B cell (primary cell): ENCODE measurements at regions of chr10 and their contacts with region 1.

Region 1: GRCh38 chr10:124601431-124602120 is 140.0 kb downstream of the LHPP start:
- DNase-seq: peak; percentile 96
- ATAC-seq: peak; percentile 85
- H3K4me3 ChIP-seq: peak overlapping the region in 2 of 5 experiments; percentile 5 to 18
- H3K4me3 Mint-ChIP-seq: peak overlapping the region; percentile 52
- H3K27ac ChIP-seq: peak overlapping the region; percentile 90 to 99
- H3K27ac Mint-ChIP-seq: peak overlapping the region; percentile 99
- H3K4me1 ChIP-seq: peaks cover 98 to 100% of the 10 kb centered on the region in 2 donors
- H3K4me1 Mint-ChIP-seq: peaks cover 94% of the 10 kb centered on the region
- H3K27me3 ChIP-seq: no peaks in the 10 kb centered on the region
- H3K27me3 Mint-ChIP-seq: no peaks in the 10 kb centered on the region
- CTCF ChIP-seq: no peak

Region 2: DNA sequence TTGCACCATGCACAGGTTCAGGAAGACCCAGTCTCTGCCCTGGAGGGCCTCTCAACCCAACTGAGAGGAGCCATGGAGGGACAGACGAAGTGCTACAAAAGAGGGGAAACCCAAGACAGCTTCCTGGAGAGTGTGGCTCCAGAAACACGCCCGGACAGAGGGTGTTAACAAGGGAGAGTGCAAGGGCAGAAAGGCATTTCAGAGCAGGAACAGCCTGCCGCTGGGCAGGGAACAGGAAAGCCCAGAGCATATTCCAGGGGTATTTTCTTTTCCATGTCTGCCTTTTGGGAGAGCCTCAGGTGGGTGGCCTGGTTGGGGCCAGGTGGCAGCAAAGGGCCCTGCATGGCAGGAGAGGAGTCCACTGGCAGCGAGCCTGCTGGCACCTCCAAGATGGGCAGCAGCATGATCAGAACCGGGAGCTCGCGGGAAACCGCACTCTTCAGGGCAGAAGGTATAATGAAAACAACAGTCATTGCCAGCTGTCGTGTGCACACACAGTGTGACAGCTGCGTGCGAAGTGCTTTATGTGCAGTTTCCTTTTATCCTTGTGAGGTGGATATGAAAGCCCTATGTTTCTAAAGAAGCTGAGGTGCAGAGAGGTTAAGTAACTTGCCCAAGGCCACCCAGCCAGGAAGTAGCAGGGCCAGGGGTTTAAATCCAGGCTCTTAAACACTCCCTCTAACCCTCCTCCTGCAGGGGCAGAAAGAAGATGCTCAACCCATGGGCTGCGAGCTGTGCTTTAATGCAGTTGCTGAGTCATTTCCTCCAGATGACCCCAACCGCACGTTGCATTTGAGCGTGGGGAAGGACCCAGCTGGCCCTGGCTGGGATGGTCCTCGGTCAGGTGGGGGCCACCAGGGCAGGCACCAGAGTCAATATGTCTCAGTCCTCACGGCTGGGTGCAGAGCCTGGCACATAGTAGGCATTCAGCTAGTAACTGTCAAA is 311.5 kb before region 1 on chr10:
- CTCF ChIA-PET with region 1: no interaction called
- POLR2A ChIA-PET with region 1: no interaction called
- intact Hi-C with region 1: no loop called
- DNase-seq: no peak
- ATAC-seq: no peak
- H3K4me3 ChIP-seq: no peak overlapping the region
- H3K4me3 Mint-ChIP-seq: no peak overlapping the region
- H3K27ac ChIP-seq: no peak overlapping the region
- H3K27ac Mint-ChIP-seq: no peak overlapping the region
- H3K4me1 ChIP-seq: peaks cover 9 to 13% of the 10 kb centered on the region in 2 donors
- H3K4me1 Mint-ChIP-seq: peaks cover 14% of the 10 kb centered on the region
- H3K27me3 ChIP-seq: no peaks in the 10 kb centered on the region
- H3K27me3 Mint-ChIP-seq: no peaks in the 10 kb centered on the region
- CTCF ChIP-seq: no peak

Region 3: GRCh38 chr10:124539935-124540641 is 61.5 kb before region 1 on chr10:
- CTCF ChIA-PET with region 1: interaction called, 74 read pairs
- POLR2A ChIA-PET with region 1: interaction called, 21 read pairs
- intact Hi-C with region 1: loop called (anchors 1 kb)
- DNase-seq: peak; percentile 89
- ATAC-seq: peak; percentile 71
- H3K4me3 ChIP-seq: no peak overlapping the region
- H3K4me3 Mint-ChIP-seq: peak overlapping the region; percentile 65
- H3K27ac ChIP-seq: peak overlapping the region; percentile 76 to 94
- H3K27ac Mint-ChIP-seq: peak overlapping the region; percentile 95
- H3K4me1 ChIP-seq: peaks cover 88 to 99% of the 10 kb centered on the region in 2 donors
- H3K4me1 Mint-ChIP-seq: peaks cover 90% of the 10 kb centered on the region
- H3K27me3 ChIP-seq: no peaks in the 10 kb centered on the region
- H3K27me3 Mint-ChIP-seq: no peaks in the 10 kb centered on the region
- CTCF ChIP-seq: peak; percentile 69

Region 4: DNA sequence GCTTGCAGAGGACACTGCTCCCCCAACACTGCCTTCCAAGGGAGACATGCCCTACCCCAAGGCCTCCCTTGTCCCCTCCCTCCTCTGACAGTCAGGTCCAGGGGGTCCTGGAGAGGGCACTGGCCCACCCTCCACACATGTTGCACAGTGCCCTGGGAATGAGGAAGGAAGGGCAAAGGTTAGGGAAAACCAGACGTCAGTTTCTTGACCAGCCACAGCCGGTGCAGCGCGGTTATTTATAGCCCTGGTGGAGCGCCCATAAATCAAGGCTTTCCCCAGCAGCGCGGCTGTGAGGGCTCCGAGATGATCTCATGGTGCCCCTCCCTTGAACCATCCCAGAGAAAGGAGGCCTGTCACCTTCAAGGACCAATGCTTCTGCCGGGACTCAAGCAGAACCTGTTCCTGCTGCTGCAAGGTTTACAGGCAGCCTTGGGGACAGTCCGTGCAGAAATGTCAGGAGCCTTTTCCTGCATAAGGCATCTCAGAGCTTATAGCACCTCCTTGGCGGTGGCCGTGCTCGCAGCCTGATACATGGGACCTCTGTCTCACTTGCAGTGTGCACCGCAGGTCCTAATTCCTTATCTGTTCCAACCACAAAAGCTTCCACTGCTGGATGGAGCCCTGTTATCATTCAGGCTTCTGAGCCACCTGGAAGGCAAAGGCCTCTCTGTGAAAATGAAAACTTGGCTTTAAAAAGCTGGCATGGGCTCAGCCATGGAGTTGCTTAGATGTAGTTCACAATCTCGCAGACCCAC is 12.7 kb before region 1 on chr10:
- CTCF ChIA-PET with region 1: interaction called, 9 read pairs
- POLR2A ChIA-PET with region 1: interaction called, 18 read pairs
- intact Hi-C with region 1: loop called (anchors 1 kb)
- DNase-seq: no peak
- ATAC-seq: peak; percentile 18
- H3K4me3 ChIP-seq: no peak overlapping the region
- H3K4me3 Mint-ChIP-seq: peak overlapping the region; percentile 45
- H3K27ac ChIP-seq: no peak overlapping the region
- H3K27ac Mint-ChIP-seq: peak overlapping the region; percentile 50
- H3K4me1 ChIP-seq: peaks cover 44 to 48% of the 10 kb centered on the region in 2 donors
- H3K4me1 Mint-ChIP-seq: peaks cover 58% of the 10 kb centered on the region
- H3K27me3 ChIP-seq: no peaks in the 10 kb centered on the region
- H3K27me3 Mint-ChIP-seq: no peaks in the 10 kb centered on the region
- CTCF ChIP-seq: no peak

Region 5: DNA sequence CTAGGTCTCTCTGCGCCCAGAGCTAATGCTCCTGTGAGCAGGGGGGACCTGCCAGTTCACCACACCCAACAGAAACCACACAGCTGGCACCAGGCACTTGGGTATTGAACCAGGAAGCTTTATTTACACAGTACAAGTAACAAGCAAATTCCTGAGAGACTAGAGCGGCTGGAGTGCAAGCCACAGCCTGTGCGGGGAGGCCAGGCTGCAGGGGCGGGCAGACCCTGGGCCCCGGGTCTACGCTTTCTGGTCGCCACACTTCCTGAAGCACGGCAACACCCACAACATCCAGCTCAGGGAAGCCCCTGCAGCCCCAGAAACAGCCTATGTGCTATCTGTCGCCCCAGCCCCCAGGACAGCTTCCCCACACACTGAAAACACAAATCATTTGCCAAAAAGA is 17.6 kb after region 1 on chr10:
- CTCF ChIA-PET with region 1: interaction called, 37 read pairs
- POLR2A ChIA-PET with region 1: interaction called, 163 read pairs
- intact Hi-C with region 1: loop called (anchors 1 kb)
- DNase-seq: peak; percentile 84
- ATAC-seq: peak; percentile 75
- H3K4me3 ChIP-seq: peak overlapping the region in 4 of 5 experiments; percentile 19 to 55 (median 28)
- H3K4me3 Mint-ChIP-seq: peak overlapping the region; percentile 87
- H3K27ac ChIP-seq: peak overlapping the region; percentile 97 to 98
- H3K27ac Mint-ChIP-seq: peak overlapping the region; percentile 99
- H3K4me1 ChIP-seq: peaks cover 96 to 100% of the 10 kb centered on the region in 2 donors
- H3K4me1 Mint-ChIP-seq: peaks cover 93% of the 10 kb centered on the region
- H3K27me3 ChIP-seq: no peaks in the 10 kb centered on the region
- H3K27me3 Mint-ChIP-seq: no peaks in the 10 kb centered on the region
- CTCF ChIP-seq: no peak

Region 6: DNA sequence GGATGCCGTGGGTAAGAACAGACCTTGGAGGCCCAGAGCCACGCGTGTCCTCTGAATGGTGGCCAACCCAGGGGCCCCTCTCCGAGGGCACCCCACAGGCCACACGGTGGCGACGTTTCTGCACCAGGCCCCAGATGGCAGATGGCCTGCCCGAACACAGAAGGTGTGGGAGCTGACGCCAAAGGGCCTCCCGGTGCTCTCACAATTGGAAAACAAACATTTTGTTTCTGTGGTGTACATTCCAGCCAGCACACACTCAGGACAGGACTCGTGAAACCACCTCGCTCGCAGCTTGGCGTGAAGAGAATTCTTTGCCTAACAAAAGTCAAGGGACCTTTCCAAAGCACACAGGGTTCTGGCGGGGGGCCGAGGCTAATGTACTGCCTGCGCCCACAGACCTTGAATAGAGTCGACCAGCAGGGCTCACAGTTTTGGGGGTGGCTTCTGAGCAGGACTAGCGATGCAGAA is 30.5 kb after region 1 on chr10:
- CTCF ChIA-PET with region 1: interaction called, 34 read pairs
- POLR2A ChIA-PET with region 1: interaction called, 10 read pairs
- intact Hi-C with region 1: no loop called
- DNase-seq: peak; percentile 37
- ATAC-seq: no peak
- H3K4me3 ChIP-seq: no peak overlapping the region
- H3K4me3 Mint-ChIP-seq: peak overlapping the region; percentile 7
- H3K27ac ChIP-seq: peak overlapping the region; percentile 28 to 97
- H3K27ac Mint-ChIP-seq: peak overlapping the region; percentile 99
- H3K4me1 ChIP-seq: peaks cover 86 to 92% of the 10 kb centered on the region in 2 donors
- H3K4me1 Mint-ChIP-seq: peaks cover 88% of the 10 kb centered on the region
- H3K27me3 ChIP-seq: no peaks in the 10 kb centered on the region
- H3K27me3 Mint-ChIP-seq: no peaks in the 10 kb centered on the region
- CTCF ChIP-seq: no peak

Region 7: GRCh38 chr10:124656541-124656940 is 55.0 kb after region 1 on chr10:
- CTCF ChIA-PET with region 1: no interaction called
- POLR2A ChIA-PET with region 1: no interaction called
- intact Hi-C with region 1: no loop called
- DNase-seq: no peak
- ATAC-seq: no peak
- H3K4me3 ChIP-seq: no peak overlapping the region
- H3K4me3 Mint-ChIP-seq: no peak overlapping the region
- H3K27ac ChIP-seq: peak overlapping the region in 1 of 2 donors; percentile 92
- H3K27ac Mint-ChIP-seq: peak overlapping the region; percentile 60
- H3K4me1 ChIP-seq: peaks cover 86 to 93% of the 10 kb centered on the region in 2 donors
- H3K4me1 Mint-ChIP-seq: peaks cover 88% of the 10 kb centered on the region
- H3K27me3 ChIP-seq: no peaks in the 10 kb centered on the region
- H3K27me3 Mint-ChIP-seq: no peaks in the 10 kb centered on the region
- CTCF ChIP-seq: no peak

Region 8: GRCh38 chr10:125812128-125812750 is 1210.7 kb after region 1 on chr10:
- CTCF ChIA-PET with region 1: no interaction called
- POLR2A ChIA-PET with region 1: no interaction called
- intact Hi-C with region 1: no loop called
- DNase-seq: no peak
- ATAC-seq: no peak
- H3K4me3 ChIP-seq: no peak overlapping the region
- H3K4me3 Mint-ChIP-seq: no peak overlapping the region
- H3K27ac ChIP-seq: no peak overlapping the region
- H3K27ac Mint-ChIP-seq: no peak overlapping the region
- H3K4me1 ChIP-seq: no peaks in the 10 kb centered on the region
- H3K4me1 Mint-ChIP-seq: no peaks in the 10 kb centered on the region
- H3K27me3 ChIP-seq: no peaks in the 10 kb centered on the region
- H3K27me3 Mint-ChIP-seq: no peaks in the 10 kb centered on the region
- CTCF ChIP-seq: no peak